Mammary epithelial cell (primary cell): ENCODE measurements at regions of chr6 and their contacts with region 1.

Region 1: GRCh38 chr6:138692058-138692977 is 81.3 kb upstream of the CCDC28A start:
- DNase-seq: peak; percentile 55
- H3K4me3 ChIP-seq: peak overlapping the region; percentile 65 to 89 (median 68)
- H3K27ac ChIP-seq: peak overlapping the region; percentile 91
- H3K4me1 ChIP-seq: peaks cover 16% of the 10 kb centered on the region
- H3K27me3 ChIP-seq: no peaks in the 10 kb centered on the region
- CTCF ChIP-seq: peak; percentile 56 to 74

Region 2: DNA sequence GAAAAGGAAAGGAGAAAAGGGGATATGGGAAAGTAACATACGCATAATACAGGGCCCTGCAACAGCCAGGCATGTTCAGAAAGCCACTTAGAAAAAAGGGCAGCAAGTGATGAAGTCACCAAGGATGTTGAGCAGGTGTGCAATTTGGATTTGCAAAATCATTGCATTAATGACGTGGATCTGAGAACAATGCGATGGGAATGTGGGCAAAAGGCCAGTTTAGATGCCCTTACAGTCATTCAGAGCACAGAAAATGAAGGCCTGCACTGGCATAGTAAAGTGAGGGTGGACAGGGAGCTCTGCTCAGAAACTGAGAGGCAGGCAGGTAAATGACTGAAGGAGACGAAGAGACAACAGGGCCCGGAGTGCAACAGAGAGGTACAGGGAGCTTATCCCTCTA is 69.4 kb before region 1 on chr6:
- CTCF ChIA-PET with region 1: interaction called, 3 read pairs
- dilution Hi-C with region 1: no loop called
- in situ Hi-C with region 1: no loop called
- intact Hi-C with region 1: loop called (anchors 2 kb)
- DNase-seq: peak; percentile 81
- H3K4me3 ChIP-seq: no peak overlapping the region
- H3K27ac ChIP-seq: no peak overlapping the region
- H3K4me1 ChIP-seq: peaks cover 7% of the 10 kb centered on the region
- H3K27me3 ChIP-seq: no peaks in the 10 kb centered on the region
- CTCF ChIP-seq: no peak

Region 3: GRCh38 chr6:138638604-138639003 is 53.7 kb before region 1 on chr6:
- CTCF ChIA-PET with region 1: interaction called, 7 read pairs
- dilution Hi-C with region 1: no loop called
- in situ Hi-C with region 1: no loop called
- intact Hi-C with region 1: loop called (anchors 5 kb)
- DNase-seq: no peak
- H3K4me3 ChIP-seq: no peak overlapping the region
- H3K27ac ChIP-seq: no peak overlapping the region
- H3K4me1 ChIP-seq: no peaks in the 10 kb centered on the region
- H3K27me3 ChIP-seq: no peaks in the 10 kb centered on the region
- CTCF ChIP-seq: no peak

Region 4: GRCh38 chr6:138654715-138655634 is 37.3 kb before region 1 on chr6:
- CTCF ChIA-PET with region 1: no interaction called
- dilution Hi-C with region 1: no loop called
- in situ Hi-C with region 1: no loop called
- intact Hi-C with region 1: loop called (anchors 2 kb)
- DNase-seq: peak; percentile 78
- H3K4me3 ChIP-seq: peak overlapping the region; percentile 11 to 35 (median 30)
- H3K27ac ChIP-seq: peak overlapping the region; percentile 76
- H3K4me1 ChIP-seq: peaks cover 37% of the 10 kb centered on the region
- H3K27me3 ChIP-seq: no peaks in the 10 kb centered on the region
- CTCF ChIP-seq: no peak

Region 5: DNA sequence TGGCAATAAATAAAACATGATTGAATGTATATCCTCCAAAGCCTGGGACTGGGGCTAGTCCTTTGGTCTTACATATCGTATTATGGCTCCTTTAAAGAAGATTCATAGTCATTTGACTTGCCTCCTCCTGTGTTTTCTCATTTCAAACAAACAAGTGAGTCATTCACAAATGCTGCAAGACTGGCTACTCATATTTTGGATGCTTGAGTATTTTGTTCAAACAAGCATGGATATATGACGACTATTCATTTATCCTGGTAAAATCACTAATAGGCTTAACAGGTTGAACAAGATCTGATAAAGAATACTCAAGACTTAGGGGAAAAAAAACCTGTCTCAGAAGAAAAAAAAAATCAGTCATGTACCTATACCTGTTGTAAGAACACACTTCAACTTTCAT is 29.8 kb before region 1 on chr6:
- CTCF ChIA-PET with region 1: no interaction called
- dilution Hi-C with region 1: no loop called
- in situ Hi-C with region 1: no loop called
- intact Hi-C with region 1: loop called (anchors 1 kb)
- DNase-seq: peak; percentile 87
- H3K4me3 ChIP-seq: no peak overlapping the region
- H3K27ac ChIP-seq: no peak overlapping the region
- H3K4me1 ChIP-seq: peaks cover 2% of the 10 kb centered on the region
- H3K27me3 ChIP-seq: no peaks in the 10 kb centered on the region
- CTCF ChIP-seq: no peak

Region 6: DNA sequence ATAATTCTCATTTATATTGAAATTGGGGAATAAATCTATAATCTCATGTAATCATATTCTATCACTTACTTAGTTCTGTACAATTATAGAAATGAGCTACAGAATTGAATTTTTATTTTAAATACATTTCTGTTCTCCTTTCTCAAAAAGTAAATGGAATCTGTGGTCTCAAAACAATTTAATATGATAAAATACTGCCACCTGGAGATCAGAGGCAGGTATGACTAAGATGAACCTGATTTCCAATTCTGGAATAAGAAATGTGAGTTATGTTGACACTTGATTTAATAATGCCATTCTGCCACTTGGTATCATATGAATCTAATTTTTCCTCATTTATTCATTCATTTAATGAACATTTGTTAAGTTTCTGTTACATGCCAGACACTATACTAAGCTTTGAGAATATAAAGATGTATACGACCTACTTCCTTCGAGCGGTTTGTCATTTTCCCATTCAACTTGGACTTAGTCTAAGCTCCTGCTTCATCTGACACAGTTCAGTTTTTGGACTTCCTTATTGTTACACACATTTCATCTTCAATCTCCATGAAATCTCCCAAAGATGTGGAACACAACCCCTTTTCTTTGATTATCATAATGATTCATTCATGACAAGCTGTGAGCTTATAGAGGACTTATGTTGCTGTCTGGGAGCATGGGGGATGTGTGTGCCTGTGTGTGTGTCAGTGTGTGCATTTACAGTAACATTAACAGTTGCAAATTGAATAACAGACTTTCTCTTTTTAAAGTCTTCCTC is 73.8 kb after region 1 on chr6:
- CTCF ChIA-PET with region 1: no interaction called
- dilution Hi-C with region 1: no loop called
- in situ Hi-C with region 1: no loop called
- intact Hi-C with region 1: loop called (anchors 1 kb)
- DNase-seq: peak; percentile 20
- H3K4me3 ChIP-seq: no peak overlapping the region
- H3K27ac ChIP-seq: no peak overlapping the region
- H3K4me1 ChIP-seq: no peaks in the 10 kb centered on the region
- H3K27me3 ChIP-seq: no peaks in the 10 kb centered on the region
- CTCF ChIP-seq: peak; percentile 54 to 64

Region 7: DNA sequence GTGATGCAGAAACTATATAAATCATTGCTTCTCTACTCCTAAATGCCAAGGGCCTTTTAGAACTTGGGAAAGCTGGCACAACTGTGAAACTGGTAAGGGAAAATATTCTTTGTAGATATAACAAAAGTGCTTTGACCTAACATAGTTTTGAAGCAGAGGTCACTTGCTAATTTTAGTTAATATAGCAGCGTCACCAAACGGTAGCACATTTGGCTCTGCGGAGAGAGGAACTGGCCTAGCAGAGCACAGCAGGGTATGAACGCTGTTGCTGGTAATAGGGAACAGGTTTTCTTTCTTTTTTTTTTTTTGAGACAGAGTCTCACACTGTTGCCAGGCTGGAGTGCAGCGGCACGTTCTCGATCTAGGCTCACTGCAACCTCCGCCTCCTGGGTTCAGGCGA is 171.0 kb after region 1 on chr6:
- CTCF ChIA-PET with region 1: no interaction called
- dilution Hi-C with region 1: no loop called
- in situ Hi-C with region 1: no loop called
- intact Hi-C with region 1: no loop called
- DNase-seq: no peak
- H3K4me3 ChIP-seq: no peak overlapping the region
- H3K27ac ChIP-seq: no peak overlapping the region
- H3K4me1 ChIP-seq: no peaks in the 10 kb centered on the region
- H3K27me3 ChIP-seq: no peaks in the 10 kb centered on the region
- CTCF ChIP-seq: no peak